ENCODE measurements at regions of chr14 and their contacts with region 1.

Region 1: GRCh38 chr14:100306420-100307219 is at the start of gene SLC25A29:
- DNase-seq: no peak
- H3K4me3 ChIP-seq: peak within 1 kb of the TSS; percentile 89 to 98
- H3K27ac ChIP-seq: peak within 1 kb of the TSS; percentile 85
- H3K4me1 ChIP-seq: peaks cover 51% of the 10 kb centered on the region
- H3K27me3 ChIP-seq: no peaks in the 10 kb centered on the region
- CTCF ChIP-seq: no peak
- POLR2A ChIP-seq: peak; percentile 45 to 60
- total RNA-seq, gene SLC25A29: 58.9 TPM

Region 2: GRCh38 chr14:100239840-100240724 is 66.5 kb before region 1 on chr14:
- intact Hi-C with region 1: loop called (anchors 5 kb)
- DNase-seq: peak in 1 of 2 donors; percentile 93
- H3K4me3 ChIP-seq: peak overlapping the region; percentile 84 to 100
- H3K27ac ChIP-seq: peak overlapping the region; percentile 99
- H3K4me1 ChIP-seq: peaks cover 69% of the 10 kb centered on the region
- H3K27me3 ChIP-seq: no peaks in the 10 kb centered on the region
- CTCF ChIP-seq: peak in 2 of 3 experiments; percentile 66 to 67
- POLR2A ChIP-seq: no peak

Region 3: GRCh38 chr14:100736234-100737180 is 429.9 kb after region 1 on chr14:
- intact Hi-C with region 1: no loop called
- DNase-seq: no peak
- H3K4me3 ChIP-seq: no peak overlapping the region
- H3K27ac ChIP-seq: no peak overlapping the region
- H3K4me1 ChIP-seq: no peaks in the 10 kb centered on the region
- H3K27me3 ChIP-seq: no peaks in the 10 kb centered on the region
- CTCF ChIP-seq: no peak
- POLR2A ChIP-seq: no peak